ENCODE measurements at regions of chr21 and their contacts with region 1.

Region 1: GRCh38 chr21:40120940-40121575 is 253.8 kb downstream of the PCP4 start:
- DNase-seq: peak; percentile 7
- H3K4me3 Mint-ChIP-seq: no peak overlapping the region
- H3K27ac Mint-ChIP-seq: no peak overlapping the region
- H3K4me1 Mint-ChIP-seq: no peaks in the 10 kb centered on the region
- H3K27me3 Mint-ChIP-seq: peaks cover 13% of the 10 kb centered on the region
- CTCF ChIP-seq: peak; percentile 64

Region 2: GRCh38 chr21:39518138-39518846 is 602.8 kb before region 1 on chr21:
- CTCF ChIA-PET with region 1: interaction called, 7 read pairs
- POLR2A ChIA-PET with region 1: no interaction called
- intact Hi-C with region 1: loop called (anchors 2 kb)
- DNase-seq: peak; percentile 61
- H3K4me3 Mint-ChIP-seq: no peak overlapping the region
- H3K27ac Mint-ChIP-seq: peak overlapping the region; percentile 76
- H3K4me1 Mint-ChIP-seq: peaks cover 16% of the 10 kb centered on the region
- H3K27me3 Mint-ChIP-seq: no peaks in the 10 kb centered on the region
- CTCF ChIP-seq: peak; percentile 91

Region 3: GRCh38 chr21:39754811-39755210 is 366.2 kb before region 1 on chr21:
- CTCF ChIA-PET with region 1: no interaction called
- POLR2A ChIA-PET with region 1: no interaction called
- intact Hi-C with region 1: no loop called
- DNase-seq: no peak
- H3K4me3 Mint-ChIP-seq: no peak overlapping the region
- H3K27ac Mint-ChIP-seq: no peak overlapping the region
- H3K4me1 Mint-ChIP-seq: no peaks in the 10 kb centered on the region
- H3K27me3 Mint-ChIP-seq: peaks cover 22% of the 10 kb centered on the region
- CTCF ChIP-seq: no peak

Region 4: DNA sequence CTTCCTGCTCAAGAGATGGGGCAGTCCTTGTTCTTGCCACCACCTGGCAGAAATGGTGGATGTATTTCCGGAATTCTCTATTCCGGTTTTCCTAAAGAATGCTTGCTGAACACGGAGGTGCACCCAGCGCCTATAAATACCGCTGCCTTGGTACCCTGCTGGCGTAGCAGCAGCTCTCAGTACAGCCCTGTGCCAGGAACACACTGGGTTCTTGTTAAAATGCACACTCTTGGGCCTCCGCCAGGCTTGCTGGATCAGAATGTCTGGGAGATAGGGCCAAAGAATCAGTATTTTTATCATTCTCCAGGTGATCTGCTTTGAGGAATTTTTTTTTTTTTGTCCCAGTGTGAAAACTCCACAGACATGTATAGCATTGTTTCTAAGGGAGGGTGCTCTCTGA is 321.9 kb before region 1 on chr21:
- CTCF ChIA-PET with region 1: interaction called, 10 read pairs
- POLR2A ChIA-PET with region 1: no interaction called
- intact Hi-C with region 1: no loop called
- DNase-seq: no peak
- H3K4me3 Mint-ChIP-seq: no peak overlapping the region
- H3K27ac Mint-ChIP-seq: no peak overlapping the region
- H3K4me1 Mint-ChIP-seq: no peaks in the 10 kb centered on the region
- H3K27me3 Mint-ChIP-seq: no peaks in the 10 kb centered on the region
- CTCF ChIP-seq: no peak

Region 5: DNA sequence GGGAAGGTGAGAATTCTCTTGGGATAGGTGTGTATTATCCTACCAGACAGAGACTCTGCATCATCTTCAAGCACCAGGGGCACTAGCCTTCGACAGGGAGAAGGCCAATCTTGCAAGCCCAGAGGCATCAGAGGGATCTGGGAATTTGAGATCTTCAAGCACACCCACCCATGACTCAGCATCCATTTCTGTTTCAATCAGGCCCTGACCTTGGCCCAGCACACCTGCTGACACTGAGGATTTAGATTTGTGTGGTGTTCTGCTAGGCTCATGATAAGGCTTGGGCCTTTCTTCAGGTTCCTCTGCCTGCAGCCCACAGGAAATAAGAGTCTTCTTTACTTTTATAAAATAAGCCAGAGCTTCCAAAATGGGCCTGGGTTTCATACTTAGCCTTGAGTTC is 260.5 kb before region 1 on chr21:
- CTCF ChIA-PET with region 1: interaction called, 23 read pairs
- POLR2A ChIA-PET with region 1: no interaction called
- intact Hi-C with region 1: no loop called
- DNase-seq: no peak
- H3K4me3 Mint-ChIP-seq: no peak overlapping the region
- H3K27ac Mint-ChIP-seq: no peak overlapping the region
- H3K4me1 Mint-ChIP-seq: no peaks in the 10 kb centered on the region
- H3K27me3 Mint-ChIP-seq: peaks cover 31% of the 10 kb centered on the region
- CTCF ChIP-seq: no peak

Region 6: DNA sequence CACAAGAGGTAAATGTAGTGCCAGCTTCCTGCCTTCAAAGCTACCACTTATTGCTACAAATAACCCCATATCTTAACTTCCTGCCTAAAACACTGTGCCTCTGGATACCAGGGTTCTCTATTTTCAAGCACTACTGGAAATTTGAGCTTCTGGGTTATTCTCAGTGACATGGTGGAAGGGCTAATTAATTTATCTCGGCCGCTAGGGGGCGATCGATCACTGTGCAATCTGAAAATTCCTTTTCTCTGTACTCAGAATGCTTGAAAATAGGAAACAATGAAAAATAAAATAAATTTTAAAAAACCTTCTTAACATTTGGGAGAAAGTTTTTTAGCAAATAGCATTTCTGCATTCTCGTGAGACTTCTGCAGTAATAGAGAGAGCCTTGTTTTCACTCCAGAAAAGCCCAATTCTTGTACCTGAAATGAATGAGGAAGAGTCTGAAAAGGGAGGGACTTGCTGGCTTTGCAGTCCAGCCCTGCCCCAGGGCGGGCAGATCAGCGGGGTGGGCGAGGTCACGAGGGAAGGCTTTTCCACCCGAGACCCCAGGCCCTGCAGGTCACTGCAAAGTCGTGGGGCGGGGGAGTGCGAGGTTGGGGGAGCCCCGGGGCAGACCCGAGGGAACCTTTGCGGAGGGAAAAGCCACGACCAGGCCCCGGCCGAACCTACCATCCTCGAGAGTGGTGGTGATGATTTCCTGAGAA is 22.9 kb after region 1 on chr21:
- CTCF ChIA-PET with region 1: interaction called, 13 read pairs
- POLR2A ChIA-PET with region 1: no interaction called
- intact Hi-C with region 1: no loop called
- DNase-seq: peak; percentile 40
- H3K4me3 Mint-ChIP-seq: no peak overlapping the region
- H3K27ac Mint-ChIP-seq: no peak overlapping the region
- H3K4me1 Mint-ChIP-seq: no peaks in the 10 kb centered on the region
- H3K27me3 Mint-ChIP-seq: no peaks in the 10 kb centered on the region
- CTCF ChIP-seq: peak; percentile 60

Region 7: GRCh38 chr21:40270047-40270446 is 149.0 kb after region 1 on chr21:
- CTCF ChIA-PET with region 1: no interaction called
- POLR2A ChIA-PET with region 1: no interaction called
- intact Hi-C with region 1: no loop called
- DNase-seq: no peak
- H3K4me3 Mint-ChIP-seq: no peak overlapping the region
- H3K27ac Mint-ChIP-seq: no peak overlapping the region
- H3K4me1 Mint-ChIP-seq: no peaks in the 10 kb centered on the region
- H3K27me3 Mint-ChIP-seq: no peaks in the 10 kb centered on the region
- CTCF ChIP-seq: no peak

Measured in MCF 10A (cell line).